Sciatic nerve (tissue), 2 donors: ENCODE measurements at regions of chr14 and their contacts with region 1.

Region 1: GRCh38 chr14:101068313-101069227 is 165.0 kb upstream of the RTL1 start:
- DNase-seq: peak; percentile 49
- ATAC-seq: no peak

Region 2: GRCh38 chr14:99749142-99749541 is 1319.4 kb before region 1 on chr14:
- intact Hi-C with region 1: loop called (anchors 10 kb)
- DNase-seq: no peak
- ATAC-seq: no peak